CD8-positive, alpha-beta T cell (primary cell): ENCODE measurements at regions of chr16 and their contacts with region 1.

Region 1: GRCh38 chr16:50210266-50211038 is 55.9 kb upstream of the ADCY7 start:
- DNase-seq: peak; percentile 34 to 76 (median 60)
- ATAC-seq: peak; percentile 90
- H3K4me3 ChIP-seq: no peak overlapping the region
- H3K4me3 Mint-ChIP-seq: no peak overlapping the region
- H3K27ac ChIP-seq: no peak overlapping the region
- H3K27ac Mint-ChIP-seq: peak overlapping the region; percentile 72
- H3K4me1 ChIP-seq: peaks cover 3% of the 10 kb centered on the region
- H3K4me1 Mint-ChIP-seq: peaks cover 39% of the 10 kb centered on the region
- H3K27me3 ChIP-seq: no peaks in the 10 kb centered on the region
- H3K27me3 Mint-ChIP-seq: no peaks in the 10 kb centered on the region
- CTCF ChIP-seq: peak; percentile 61

Region 2: DNA sequence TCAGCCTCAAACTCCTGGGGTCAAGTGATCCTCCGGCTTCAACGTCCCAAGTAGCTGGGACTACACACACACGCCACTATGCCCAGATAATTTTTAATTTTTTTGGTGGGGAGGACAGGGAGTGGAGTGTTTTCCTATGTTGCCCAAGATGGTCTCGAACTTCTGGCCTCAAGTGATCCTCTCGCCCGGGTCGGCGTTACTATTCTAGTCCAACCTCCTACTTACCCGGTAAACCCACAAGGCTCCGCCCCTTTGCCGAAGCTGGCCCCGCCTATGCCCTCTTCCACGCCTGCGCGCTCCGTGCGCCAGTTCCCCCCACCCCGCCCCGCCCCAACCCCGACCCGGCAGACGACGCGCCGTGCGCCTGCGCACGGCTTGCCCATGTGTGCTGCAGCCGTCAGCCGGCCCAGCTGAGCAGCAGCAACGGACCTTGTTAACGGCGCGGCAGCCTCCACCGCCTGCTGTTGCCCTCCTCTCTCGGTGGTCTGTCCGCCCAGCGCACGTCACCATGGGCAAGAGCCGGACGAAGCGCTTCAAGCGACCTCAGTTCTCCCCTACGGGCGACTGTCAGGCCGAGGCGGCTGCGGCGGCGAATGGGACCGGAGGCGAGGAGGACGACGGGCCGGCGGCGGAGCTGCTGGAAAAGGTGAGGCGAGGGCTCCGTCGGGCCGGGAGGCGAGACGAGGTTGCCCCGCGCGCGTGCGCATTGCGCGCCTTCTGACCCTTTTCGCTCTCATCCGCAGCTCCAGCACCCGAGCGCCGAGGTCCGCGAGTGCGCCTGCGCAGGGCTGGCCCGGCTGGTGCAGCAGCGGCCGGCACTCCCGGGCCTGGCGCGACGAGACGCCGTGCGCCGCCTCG is 144.6 kb before region 1 on chr16 and contains the start of gene HEATR3:
- CTCF ChIA-PET with region 1: interaction called, 52 read pairs
- POLR2A ChIA-PET with region 1: interaction called, 3 read pairs
- intact Hi-C with region 1: loop called (anchors 1 kb)
- DNase-seq: peak; percentile 88 to 97 (median 93)
- ATAC-seq: peak; percentile 86
- H3K4me3 ChIP-seq: peak within 1 kb of the TSS; percentile 78 to 92
- H3K4me3 Mint-ChIP-seq: peak within 1 kb of the TSS; percentile 93
- H3K27ac ChIP-seq: peak within 1 kb of the TSS; percentile 73 to 79
- H3K27ac Mint-ChIP-seq: peak within 1 kb of the TSS; percentile 92
- H3K4me1 ChIP-seq: peaks cover 17% of the 10 kb centered on the region
- H3K4me1 Mint-ChIP-seq: peaks cover 42% of the 10 kb centered on the region
- H3K27me3 ChIP-seq: no peaks in the 10 kb centered on the region
- H3K27me3 Mint-ChIP-seq: no peaks in the 10 kb centered on the region
- CTCF ChIP-seq: no peak
- total RNA-seq, gene HEATR3: 9.3 to 11.4 TPM

Region 3: DNA sequence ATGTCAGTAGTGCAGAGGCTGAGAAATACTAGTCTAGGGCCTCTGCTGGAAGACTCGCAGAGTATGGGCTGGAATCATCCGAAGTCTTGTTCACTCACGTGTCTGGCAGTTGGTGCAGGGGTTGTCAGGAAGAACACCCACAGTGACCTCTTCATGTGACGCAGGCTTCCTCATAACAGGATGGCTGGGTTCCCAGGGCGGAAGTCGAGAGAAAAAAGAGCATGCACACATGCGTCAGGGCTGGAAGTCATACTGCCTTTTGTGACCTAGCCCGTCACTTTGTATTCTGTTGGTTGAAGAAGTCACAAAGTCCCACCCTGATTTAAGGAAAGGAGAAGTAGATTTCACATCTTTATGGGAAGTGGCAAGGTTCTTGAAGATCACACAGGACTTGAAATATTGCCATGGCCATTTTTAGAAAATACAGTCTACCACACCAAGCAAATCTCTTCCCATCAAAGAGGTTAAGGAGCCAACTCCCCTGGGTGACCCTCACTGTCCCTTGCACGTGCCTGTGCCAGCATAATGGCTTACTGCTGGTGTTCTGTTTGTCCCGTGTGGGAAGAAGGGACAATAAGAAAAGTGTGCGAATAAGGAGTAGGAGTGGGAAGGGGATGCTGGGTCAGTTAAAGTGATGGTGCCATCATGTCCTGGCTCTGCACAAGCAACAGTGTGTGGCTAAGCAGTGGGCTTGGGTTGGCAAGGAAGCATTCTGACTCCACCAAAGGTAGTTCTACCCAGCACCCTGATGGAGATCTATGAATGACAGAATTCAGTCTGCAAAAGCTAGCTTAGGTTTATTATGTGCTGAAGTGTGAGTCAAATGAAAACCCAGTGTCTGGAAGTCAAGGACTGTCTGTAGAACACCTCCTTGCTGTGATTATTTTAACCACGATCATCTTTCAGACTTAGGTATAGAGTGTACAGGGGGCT is 116.6 kb before region 1 on chr16:
- CTCF ChIA-PET with region 1: interaction called, 3 read pairs
- POLR2A ChIA-PET with region 1: no interaction called
- intact Hi-C with region 1: loop called in 1 of 2 experiments (anchors 10 kb)
- DNase-seq: peak in 4 of 9 experiments; percentile 7 to 57 (median 24)
- ATAC-seq: no peak
- H3K4me3 ChIP-seq: no peak overlapping the region
- H3K4me3 Mint-ChIP-seq: no peak overlapping the region
- H3K27ac ChIP-seq: no peak overlapping the region
- H3K27ac Mint-ChIP-seq: peak overlapping the region; percentile 4
- H3K4me1 ChIP-seq: no peaks in the 10 kb centered on the region
- H3K4me1 Mint-ChIP-seq: no peaks in the 10 kb centered on the region
- H3K27me3 ChIP-seq: no peaks in the 10 kb centered on the region
- H3K27me3 Mint-ChIP-seq: no peaks in the 10 kb centered on the region
- CTCF ChIP-seq: no peak

Region 4: DNA sequence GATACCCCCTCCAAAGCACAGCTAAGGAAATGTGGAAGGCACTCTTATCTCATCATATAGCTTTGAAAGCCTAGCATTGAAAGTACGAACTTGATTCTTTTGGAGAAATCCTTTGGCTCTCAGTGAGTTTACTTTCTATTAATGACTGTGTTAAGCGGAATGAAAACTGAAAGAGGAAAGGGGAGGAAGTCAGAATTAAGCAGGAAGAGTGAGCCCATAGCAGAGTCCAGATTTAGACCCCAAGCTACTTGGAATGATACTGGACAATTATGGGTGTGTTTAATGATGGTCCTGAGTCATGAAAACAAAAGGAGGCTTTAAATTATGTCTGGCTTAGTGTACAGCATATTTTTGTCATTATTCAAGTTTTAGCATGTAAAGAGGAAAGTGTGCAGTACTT is 15.2 kb before region 1 on chr16:
- CTCF ChIA-PET with region 1: interaction called, 22 read pairs
- POLR2A ChIA-PET with region 1: interaction called, 3 read pairs
- intact Hi-C with region 1: no loop called
- DNase-seq: no peak
- ATAC-seq: no peak
- H3K4me3 ChIP-seq: no peak overlapping the region
- H3K4me3 Mint-ChIP-seq: no peak overlapping the region
- H3K27ac ChIP-seq: peak overlapping the region in 1 of 2 experiments; percentile 24
- H3K27ac Mint-ChIP-seq: peak overlapping the region; percentile 14
- H3K4me1 ChIP-seq: peaks cover 26% of the 10 kb centered on the region
- H3K4me1 Mint-ChIP-seq: peaks cover 72% of the 10 kb centered on the region
- H3K27me3 ChIP-seq: no peaks in the 10 kb centered on the region
- H3K27me3 Mint-ChIP-seq: no peaks in the 10 kb centered on the region
- CTCF ChIP-seq: no peak